ENCODE measurements at regions of chr17 and their contacts with region 1.

Region 1: DNA sequence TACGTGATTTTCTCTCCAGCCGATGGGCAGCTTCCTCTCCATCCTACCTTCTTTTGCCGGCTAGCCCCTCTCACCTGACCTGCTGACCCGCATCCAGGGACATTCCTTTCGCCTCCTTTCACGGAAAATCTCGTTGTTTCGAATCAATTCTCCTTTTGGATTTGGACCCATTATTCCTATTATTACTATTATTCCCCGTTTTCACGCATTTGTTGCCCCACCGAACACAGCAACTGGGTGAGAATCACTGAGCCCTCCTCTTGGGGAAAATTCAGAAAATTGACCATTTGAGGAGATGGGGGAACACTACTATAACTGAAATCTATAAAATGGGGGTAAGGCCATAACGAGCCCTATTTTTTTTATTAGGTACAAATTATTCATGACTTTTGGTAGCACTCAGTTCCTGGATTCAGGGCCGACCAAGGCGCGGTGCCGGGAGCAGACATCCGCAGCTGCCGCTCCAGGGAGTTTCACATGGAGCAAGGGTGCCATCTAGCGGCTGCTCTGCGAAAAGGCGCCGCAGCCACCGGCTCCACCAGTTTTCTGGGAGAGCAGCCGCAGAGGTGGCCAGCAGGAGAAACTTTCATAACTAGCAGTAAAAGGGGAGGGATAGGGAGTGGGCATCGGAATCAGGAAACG is 3.3 kb upstream of the HOXB8 start:
- DNase-seq: peak; percentile 93 to 98
- H3K4me3 ChIP-seq: peak overlapping the region; percentile 33
- H3K4me3 Mint-ChIP-seq: peak overlapping the region; percentile 63
- H3K27ac Mint-ChIP-seq: peak overlapping the region; percentile 59
- H3K4me1 ChIP-seq: peaks cover 4% of the 10 kb centered on the region
- H3K4me1 Mint-ChIP-seq: peaks cover 33% of the 10 kb centered on the region
- H3K27me3 ChIP-seq: peaks cover 27% of the 10 kb centered on the region
- H3K27me3 Mint-ChIP-seq: peaks cover 69% of the 10 kb centered on the region
- CTCF ChIP-seq: peak; percentile 100

Region 2: GRCh38 chr17:48307814-48308411 is 310.5 kb before region 1 on chr17:
- CTCF ChIA-PET with region 1: interaction called, 11 read pairs
- POLR2A ChIA-PET with region 1: no interaction called
- intact Hi-C with region 1: loop called (anchors 1 kb)
- DNase-seq: peak; percentile 83
- H3K4me3 ChIP-seq: no peak overlapping the region
- H3K4me3 Mint-ChIP-seq: no peak overlapping the region
- H3K27ac Mint-ChIP-seq: no peak overlapping the region
- H3K4me1 ChIP-seq: peaks cover 15% of the 10 kb centered on the region
- H3K4me1 Mint-ChIP-seq: peaks cover 14% of the 10 kb centered on the region
- H3K27me3 ChIP-seq: no peaks in the 10 kb centered on the region
- H3K27me3 Mint-ChIP-seq: peaks cover 16% of the 10 kb centered on the region
- CTCF ChIP-seq: peak; percentile 99 to 100

Region 3: DNA sequence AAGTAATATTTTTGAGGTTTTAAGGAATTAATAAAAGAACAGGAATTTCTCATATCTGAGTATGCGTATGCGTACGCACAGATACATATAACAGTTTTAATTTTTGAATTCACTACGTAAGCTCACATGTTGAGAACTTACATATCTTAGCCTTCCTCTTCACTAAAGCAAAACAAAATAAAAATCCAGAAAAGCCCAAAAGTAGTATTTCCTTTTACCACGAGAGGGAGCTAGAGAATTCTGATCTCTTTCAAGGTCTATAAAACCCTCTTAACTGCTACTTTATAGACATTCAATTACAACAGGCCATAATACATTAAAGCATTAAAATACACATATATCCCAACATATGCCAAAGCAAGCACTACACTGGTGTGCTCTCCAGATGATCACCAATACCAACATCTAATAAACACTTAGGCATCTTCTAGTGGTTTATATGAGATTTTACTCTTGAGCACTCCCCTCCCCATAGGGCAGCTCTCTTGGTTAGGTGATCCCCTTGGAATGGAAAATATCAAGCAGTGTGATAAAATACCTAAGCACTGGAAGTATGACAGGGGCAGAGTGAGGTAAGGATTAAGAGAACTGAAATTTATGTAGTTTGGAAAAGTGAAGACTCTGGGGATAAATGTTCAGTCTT is 282.4 kb before region 1 on chr17:
- CTCF ChIA-PET with region 1: interaction called, 11 read pairs
- POLR2A ChIA-PET with region 1: interaction called, 6 read pairs
- intact Hi-C with region 1: loop called (anchors 1 kb)
- DNase-seq: peak in 1 of 2 experiments; percentile 79
- H3K4me3 ChIP-seq: no peak overlapping the region
- H3K4me3 Mint-ChIP-seq: no peak overlapping the region
- H3K27ac Mint-ChIP-seq: no peak overlapping the region
- H3K4me1 ChIP-seq: no peaks in the 10 kb centered on the region
- H3K4me1 Mint-ChIP-seq: no peaks in the 10 kb centered on the region
- H3K27me3 ChIP-seq: no peaks in the 10 kb centered on the region; the same call in 1 of the 2 replicates
- H3K27me3 Mint-ChIP-seq: peaks cover 18% of the 10 kb centered on the region
- CTCF ChIP-seq: peak; percentile 90 to 96

Region 4: GRCh38 chr17:48351831-48352332 is 266.5 kb before region 1 on chr17:
- CTCF ChIA-PET with region 1: interaction called, 9 read pairs
- POLR2A ChIA-PET with region 1: no interaction called
- intact Hi-C with region 1: loop called (anchors 1 kb)
- DNase-seq: peak in 1 of 2 experiments; percentile 56
- H3K4me3 ChIP-seq: no peak overlapping the region
- H3K4me3 Mint-ChIP-seq: no peak overlapping the region
- H3K27ac Mint-ChIP-seq: no peak overlapping the region
- H3K4me1 ChIP-seq: no peaks in the 10 kb centered on the region
- H3K4me1 Mint-ChIP-seq: no peaks in the 10 kb centered on the region
- H3K27me3 ChIP-seq: no peaks in the 10 kb centered on the region; the same call in 1 of the 2 replicates
- H3K27me3 Mint-ChIP-seq: peaks cover 8% of the 10 kb centered on the region
- CTCF ChIP-seq: peak; percentile 90

Region 5: GRCh38 chr17:48492401-48493298 is 125.7 kb before region 1 on chr17:
- CTCF ChIA-PET with region 1: interaction called, 7 read pairs
- POLR2A ChIA-PET with region 1: interaction called, 4 read pairs
- intact Hi-C with region 1: loop called (anchors 2 kb)
- DNase-seq: peak; percentile 80 to 91
- H3K4me3 ChIP-seq: peak overlapping the region; percentile 15
- H3K4me3 Mint-ChIP-seq: peak overlapping the region; percentile 52
- H3K27ac Mint-ChIP-seq: no peak overlapping the region
- H3K4me1 ChIP-seq: peaks cover 14% of the 10 kb centered on the region
- H3K4me1 Mint-ChIP-seq: peaks cover 9% of the 10 kb centered on the region
- H3K27me3 ChIP-seq: peaks cover 5% of the 10 kb centered on the region; the same call in 1 of the 2 replicates
- H3K27me3 Mint-ChIP-seq: peaks cover 8% of the 10 kb centered on the region
- CTCF ChIP-seq: peak; percentile 99

Region 6: DNA sequence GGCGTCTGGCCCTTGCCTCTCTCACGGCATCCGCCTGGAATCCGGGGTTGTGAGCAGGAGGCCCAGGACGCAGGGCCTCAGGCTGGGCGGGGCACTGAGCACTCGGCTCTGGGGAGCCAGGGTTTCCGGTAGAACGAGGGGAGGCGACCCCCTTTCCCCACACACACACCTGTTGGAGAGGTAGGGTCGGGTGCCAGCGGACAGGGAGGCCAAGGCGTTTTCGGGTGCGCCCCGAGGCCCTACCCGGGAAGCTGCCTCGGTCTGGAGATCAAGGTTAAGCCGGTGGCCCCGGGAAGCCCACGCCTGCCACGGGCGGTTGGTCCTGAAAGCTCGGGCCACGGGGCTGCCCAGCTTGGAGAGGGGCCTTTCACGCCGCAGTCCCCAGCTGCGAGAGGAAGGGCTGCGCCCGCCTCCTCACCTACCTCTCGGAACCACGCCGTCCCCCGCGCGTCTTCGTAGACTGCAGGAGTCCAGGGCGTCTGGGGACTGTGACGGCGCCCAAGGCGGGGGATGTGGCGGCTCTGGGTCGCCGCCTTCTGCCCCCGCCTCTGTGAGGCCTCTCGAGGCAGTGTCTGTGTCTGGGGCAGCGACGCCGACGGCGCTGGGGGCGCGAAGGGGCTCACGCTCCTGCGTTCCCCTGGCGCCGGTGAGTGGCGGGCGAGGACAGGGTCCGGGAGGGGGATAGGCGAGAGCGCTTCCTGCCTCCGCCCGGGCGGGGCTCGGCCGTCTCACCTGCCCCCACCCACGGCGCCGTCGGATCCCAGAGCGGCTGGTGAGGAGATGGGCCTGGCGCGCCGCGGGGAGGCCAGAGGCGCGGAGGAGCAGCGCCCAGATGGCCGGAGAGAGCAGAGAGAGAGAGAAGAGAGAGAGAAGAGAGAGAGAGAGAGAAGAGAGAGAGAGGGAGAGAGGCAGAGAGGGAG is 28.1 kb after region 1 on chr17:
- CTCF ChIA-PET with region 1: no interaction called
- POLR2A ChIA-PET with region 1: no interaction called
- intact Hi-C with region 1: no loop called
- DNase-seq: peak; percentile 73 to 82
- H3K4me3 ChIP-seq: peak overlapping the region; percentile 30
- H3K4me3 Mint-ChIP-seq: peak overlapping the region; percentile 77
- H3K27ac Mint-ChIP-seq: no peak overlapping the region
- H3K4me1 ChIP-seq: peaks cover 9% of the 10 kb centered on the region; the same call in 1 of the 2 replicates
- H3K4me1 Mint-ChIP-seq: peaks cover 7% of the 10 kb centered on the region
- H3K27me3 ChIP-seq: no peaks in the 10 kb centered on the region
- H3K27me3 Mint-ChIP-seq: peaks cover 24% of the 10 kb centered on the region
- CTCF ChIP-seq: no peak

Region 7: GRCh38 chr17:48804925-48805411 is 186.6 kb after region 1 on chr17:
- CTCF ChIA-PET with region 1: no interaction called
- POLR2A ChIA-PET with region 1: no interaction called
- intact Hi-C with region 1: no loop called
- DNase-seq: peak; percentile 86 to 95
- H3K4me3 ChIP-seq: no peak overlapping the region
- H3K4me3 Mint-ChIP-seq: no peak overlapping the region
- H3K27ac Mint-ChIP-seq: no peak overlapping the region
- H3K4me1 ChIP-seq: peaks cover 15% of the 10 kb centered on the region
- H3K4me1 Mint-ChIP-seq: peaks cover 17% of the 10 kb centered on the region
- H3K27me3 ChIP-seq: no peaks in the 10 kb centered on the region
- H3K27me3 Mint-ChIP-seq: no peaks in the 10 kb centered on the region
- CTCF ChIP-seq: peak; percentile 100